Motor neuron (in vitro differentiated cells): ENCODE measurements at regions of chr12 and their contacts with region 1.

Region 1: DNA sequence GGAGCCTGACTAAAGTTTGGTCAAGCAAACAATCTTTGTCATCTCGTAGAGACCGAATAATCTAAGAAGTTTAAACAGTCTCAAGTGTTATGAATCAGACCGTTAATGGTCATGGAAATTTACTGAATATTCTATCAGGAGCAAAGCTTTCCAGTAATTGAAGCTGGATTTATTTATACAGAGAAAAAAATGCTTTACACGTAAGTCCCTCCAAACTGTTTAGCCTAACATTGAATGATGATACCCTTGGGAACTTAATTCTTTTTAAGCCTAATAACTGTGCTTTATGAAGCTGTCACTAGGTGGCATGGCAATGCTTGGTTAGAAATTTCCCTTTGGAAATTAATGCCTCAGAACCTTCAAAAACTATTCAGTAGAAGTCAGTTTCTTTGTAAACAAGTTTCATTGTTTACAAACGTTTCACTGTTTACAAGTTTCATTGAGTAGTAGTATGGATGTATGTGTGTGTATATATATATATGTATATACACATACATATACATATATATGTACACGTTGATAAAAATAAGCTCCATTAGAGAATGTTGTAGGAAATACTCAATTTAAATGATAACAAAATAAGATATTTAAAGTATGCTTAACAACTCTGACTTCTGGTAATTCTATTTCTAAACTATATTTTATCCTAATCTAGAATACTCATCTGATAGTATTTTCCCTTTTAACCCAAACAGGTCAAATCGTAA is 32.1 kb downstream of the DEPDC4 start:
- ATAC-seq: peak in 5 of 8 experiments; percentile 32 to 77 (median 69)
- H3K4me3 ChIP-seq: no peak overlapping the region
- H3K27ac ChIP-seq: no peak overlapping the region
- H3K4me1 ChIP-seq: peaks cover 0 to 9% of the 10 kb centered on the region in 2 donors

Region 2: GRCh38 chr12:100348657-100349454 is 114.1 kb after region 1 on chr12:
- in situ Hi-C with region 1: loop called in 1 of 9 experiments (anchors 25 kb)
- ATAC-seq: peak; percentile 32 to 79 (median 53)
- H3K4me3 ChIP-seq: no peak overlapping the region
- H3K27ac ChIP-seq: no peak overlapping the region
- H3K4me1 ChIP-seq: no peaks in the 10 kb centered on the region

Region 3: GRCh38 chr12:100566887-100567637 is 332.3 kb after region 1 on chr12:
- in situ Hi-C with region 1: loop called in 1 of 9 experiments (anchors 10 kb)
- ATAC-seq: peak in 4 of 8 experiments; percentile 21 to 69 (median 43)
- H3K4me3 ChIP-seq: no peak overlapping the region
- H3K27ac ChIP-seq: no peak overlapping the region
- H3K4me1 ChIP-seq: peaks cover 0 to 4% of the 10 kb centered on the region in 2 donors